Activated CD4-positive, alpha-beta memory T cell treated with anti-CD3 and anti-CD28 coated beads for 36 hours (primary cell): ENCODE measurements at regions of chr15 and their contacts with region 1.

Region 1: DNA sequence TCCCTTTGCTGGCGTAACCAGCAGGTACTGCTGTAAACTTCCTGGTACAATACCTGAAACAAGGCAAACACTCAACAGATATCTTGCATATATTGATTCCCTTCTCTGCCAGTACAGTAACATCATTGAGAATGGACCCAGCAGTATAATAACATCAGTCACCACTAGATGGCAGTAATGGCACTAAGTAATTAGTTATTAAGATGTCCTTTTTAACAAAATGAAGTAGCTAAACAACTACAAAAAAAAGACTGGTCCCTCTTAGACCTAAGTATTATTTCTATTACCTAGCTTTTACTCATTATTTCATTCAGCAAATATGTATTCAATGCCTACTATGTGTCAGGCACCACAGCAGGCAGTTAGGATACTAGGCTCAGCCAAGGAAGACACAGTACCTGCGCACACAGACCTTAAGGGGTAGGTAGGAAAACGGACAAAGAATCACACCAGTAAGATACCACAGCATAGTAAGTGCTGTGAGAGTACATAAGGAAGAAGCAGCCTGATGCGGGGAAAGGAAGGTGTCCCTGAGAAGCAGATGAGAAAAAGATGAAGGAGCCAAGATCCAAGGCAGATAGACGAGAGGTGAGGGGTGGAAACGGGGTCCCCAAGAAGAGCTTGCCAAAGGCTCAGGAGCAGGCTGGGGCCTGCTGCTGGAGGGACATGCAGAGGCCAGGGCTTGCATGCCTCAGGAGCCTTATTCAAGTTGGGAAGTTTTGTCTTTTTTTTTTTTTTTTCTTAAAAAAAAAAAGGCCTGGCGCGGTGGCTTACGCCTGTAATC is 102.8 kb upstream of the CHD2 start:
- DNase-seq: no peak
- H3K4me3 Mint-ChIP-seq: no peak overlapping the region
- H3K27ac Mint-ChIP-seq: peak overlapping the region; percentile 69
- H3K4me1 Mint-ChIP-seq: peaks cover 9% of the 10 kb centered on the region
- H3K27me3 Mint-ChIP-seq: no peaks in the 10 kb centered on the region

Region 2: DNA sequence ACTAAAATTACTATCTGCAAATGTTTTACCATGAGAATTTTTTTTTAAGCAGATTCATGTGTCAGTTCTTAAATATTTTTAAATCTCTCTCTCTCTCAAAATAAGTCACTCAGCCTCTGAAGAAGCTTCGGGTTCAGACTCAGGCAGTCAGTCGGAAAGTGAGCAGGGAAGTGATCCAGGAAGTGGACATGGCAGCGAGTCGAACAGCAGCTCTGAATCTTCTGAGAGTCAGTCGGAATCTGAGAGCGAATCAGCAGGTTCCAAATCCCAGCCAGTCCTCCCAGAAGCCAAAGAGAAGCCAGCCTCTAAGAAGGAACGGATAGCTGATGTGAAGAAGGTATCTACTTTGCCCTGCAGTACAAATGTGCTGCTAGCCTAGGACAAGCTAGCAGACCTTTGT is 126.9 kb after region 1 on chr15:
- CTCF ChIA-PET with region 1: interaction called, 78 read pairs
- POLR2A ChIA-PET with region 1: interaction called, 5 read pairs
- intact Hi-C with region 1: no loop called
- DNase-seq: no peak
- H3K4me3 Mint-ChIP-seq: no peak overlapping the region
- H3K27ac Mint-ChIP-seq: peak overlapping the region; percentile 75
- H3K4me1 Mint-ChIP-seq: peaks cover 96% of the 10 kb centered on the region
- H3K27me3 Mint-ChIP-seq: no peaks in the 10 kb centered on the region

Region 3: DNA sequence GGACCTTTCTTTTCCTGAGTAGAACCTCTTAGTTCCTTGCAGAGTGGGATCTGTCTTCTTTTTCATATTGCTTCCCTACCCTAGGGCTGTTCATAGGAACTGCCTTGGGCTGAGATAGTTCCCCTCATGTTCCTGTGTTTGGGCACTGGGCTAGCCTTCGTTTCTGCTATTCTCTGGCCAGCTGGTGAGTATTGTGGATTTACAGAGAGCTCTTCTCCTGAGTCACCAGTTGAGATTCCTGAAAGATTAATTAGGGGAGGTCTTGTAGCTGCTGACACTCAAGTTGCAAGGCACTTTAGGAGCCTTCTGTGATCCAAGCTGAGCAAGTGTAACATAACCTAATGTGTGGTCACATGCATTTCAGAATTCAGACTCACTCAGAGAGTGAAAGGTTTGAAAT is 133.4 kb after region 1 on chr15:
- CTCF ChIA-PET with region 1: interaction called, 21 read pairs
- POLR2A ChIA-PET with region 1: no interaction called
- intact Hi-C with region 1: no loop called
- DNase-seq: no peak
- H3K4me3 Mint-ChIP-seq: no peak overlapping the region
- H3K27ac Mint-ChIP-seq: peak overlapping the region; percentile 51
- H3K4me1 Mint-ChIP-seq: peaks cover 74% of the 10 kb centered on the region
- H3K27me3 Mint-ChIP-seq: no peaks in the 10 kb centered on the region